Activated naive CD4-positive, alpha-beta T cell treated with anti-CD3 and anti-CD28 coated beads for 36 hours (primary cell): ENCODE measurements at regions of chr4 and their contacts with region 1.

Region 1: GRCh38 chr4:53113431-53114225 is 251.5 kb downstream of the RASL11B start:
- DNase-seq: peak; percentile 44
- H3K4me3 Mint-ChIP-seq: no peak overlapping the region
- H3K27ac Mint-ChIP-seq: peak overlapping the region; percentile 90
- H3K4me1 Mint-ChIP-seq: peaks cover 49% of the 10 kb centered on the region
- H3K27me3 Mint-ChIP-seq: no peaks in the 10 kb centered on the region

Region 2: GRCh38 chr4:53101191-53101581 is 12.4 kb before region 1 on chr4:
- CTCF ChIA-PET with region 1: no interaction called
- intact Hi-C with region 1: loop called (anchors 1 kb)
- DNase-seq: no peak
- H3K4me3 Mint-ChIP-seq: no peak overlapping the region
- H3K27ac Mint-ChIP-seq: peak overlapping the region; percentile 55
- H3K4me1 Mint-ChIP-seq: peaks cover 13% of the 10 kb centered on the region
- H3K27me3 Mint-ChIP-seq: no peaks in the 10 kb centered on the region

Region 3: DNA sequence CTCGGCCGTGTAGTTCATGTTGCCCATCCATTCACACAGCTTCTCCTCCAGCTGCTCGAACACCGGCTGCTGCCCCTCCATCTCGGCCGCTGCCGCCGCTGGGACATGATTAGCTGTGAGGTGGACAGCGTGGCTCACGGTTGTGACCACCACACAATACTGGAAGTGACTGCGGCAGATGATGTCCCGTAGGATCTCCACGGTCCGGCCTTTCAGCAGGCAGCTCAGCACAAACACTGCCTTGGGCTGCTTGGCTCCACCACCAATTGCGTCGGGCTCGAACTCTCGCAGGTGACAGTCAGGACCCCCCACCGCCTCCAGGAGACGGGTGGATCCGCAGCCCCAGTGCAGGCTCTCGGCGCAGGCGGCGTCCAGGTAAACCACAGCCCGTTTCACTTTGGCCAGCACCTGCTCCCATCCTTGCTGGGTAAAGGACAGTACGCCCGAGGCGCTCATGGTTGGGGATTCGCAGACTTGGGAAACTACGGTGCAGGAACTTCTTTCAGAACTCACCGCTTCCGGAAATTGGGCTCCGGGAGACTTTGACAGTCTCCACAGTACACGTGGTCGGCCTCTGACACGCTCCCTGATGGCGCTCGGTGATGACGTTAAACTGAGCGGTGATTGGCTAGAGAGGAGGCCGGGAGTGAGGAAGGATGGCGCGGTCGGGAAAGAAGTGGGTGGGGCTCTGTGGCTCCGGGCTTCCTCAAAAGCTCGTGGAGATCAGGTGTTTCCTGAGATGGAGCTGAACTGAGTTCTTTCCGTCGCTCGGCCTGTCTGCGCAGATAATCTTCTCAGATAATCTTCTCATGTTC is 252.1 kb after region 1 on chr4 and contains the start of gene SCFD2:
- CTCF ChIA-PET with region 1: no interaction called
- intact Hi-C with region 1: loop called (anchors 5 kb)
- DNase-seq: peak; percentile 99
- H3K4me3 Mint-ChIP-seq: peak within 1 kb of the TSS; percentile 96
- H3K27ac Mint-ChIP-seq: peak within 1 kb of the TSS; percentile 96
- H3K4me1 Mint-ChIP-seq: peaks cover 38% of the 10 kb centered on the region
- H3K27me3 Mint-ChIP-seq: peaks cover 3% of the 10 kb centered on the region
- total RNA-seq, gene SCFD2: 14.3 to 15.1 TPM